ENCODE measurements at regions of chr10 and their contacts with region 1.

Region 1: DNA sequence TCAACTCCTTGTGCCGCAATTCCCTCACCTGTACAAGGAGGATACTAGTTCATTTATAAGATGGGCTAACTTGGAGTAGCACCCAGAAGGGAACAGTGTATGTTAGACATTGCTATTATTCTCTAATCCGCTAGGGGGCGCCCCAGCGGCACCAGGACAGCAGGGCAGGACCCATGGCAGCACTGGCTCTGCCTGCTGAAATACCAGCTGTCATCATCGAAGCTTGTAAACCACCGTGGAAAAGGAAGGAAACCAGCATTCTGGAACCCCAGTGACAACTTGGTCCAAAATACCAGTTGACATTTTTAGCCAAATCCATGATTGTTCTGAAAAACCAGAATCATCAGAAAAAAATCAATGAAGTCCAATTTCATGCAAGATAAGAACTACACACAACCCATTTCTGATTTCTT is 134.4 kb downstream of the ITGA8 start:
- DNase-seq: peak; percentile 27 to 59
- ATAC-seq: peak; percentile 88 to 97
- H3K4me3 ChIP-seq: no peak overlapping the region
- H3K27ac ChIP-seq: no peak overlapping the region
- H3K4me1 ChIP-seq: no peaks in the 10 kb centered on the region
- CTCF ChIP-seq: peak; percentile 46
- EP300 ChIP-seq: no peak
- POLR2A ChIP-seq: no peak
- RAD21 ChIP-seq: peak; percentile 26 to 48; a peak in 2 of 5 replicates

Region 2: DNA sequence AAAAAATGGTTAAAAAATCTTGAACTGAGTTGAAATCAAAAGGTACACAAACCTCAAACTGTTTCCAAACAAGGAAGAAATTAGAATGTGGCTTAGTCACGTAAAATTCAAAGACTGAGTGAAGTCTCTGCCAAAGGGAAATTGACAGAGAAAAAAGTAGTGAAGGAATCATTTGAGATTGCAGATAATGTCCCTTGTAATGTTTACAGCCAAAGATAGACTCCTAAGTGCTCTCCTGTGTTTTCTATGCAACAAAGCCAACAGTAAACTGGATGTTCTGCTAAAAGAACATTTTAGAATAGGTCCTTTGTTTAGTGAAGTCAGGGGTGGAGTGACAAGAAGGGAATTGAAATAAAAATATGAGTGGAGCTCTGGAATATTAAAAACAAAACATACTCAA is 16.5 kb after region 1 on chr10:
- CTCF ChIA-PET with region 1: interaction called, 12 read pairs
- POLR2A ChIA-PET with region 1: no interaction called
- DNase-seq: no peak
- ATAC-seq: no peak
- H3K4me3 ChIP-seq: no peak overlapping the region
- H3K27ac ChIP-seq: no peak overlapping the region
- H3K4me1 ChIP-seq: no peaks in the 10 kb centered on the region
- CTCF ChIP-seq: no peak
- EP300 ChIP-seq: no peak
- POLR2A ChIP-seq: no peak
- RAD21 ChIP-seq: no peak